Activated CD4-positive, alpha-beta T cell treated with anti-CD3 and anti-CD28 coated beads, Interleukin-2, amount 10 ng/mL, durations not matched to agents 24 days and 14 days (primary cell): ENCODE measurements at regions of chr12 and their contacts with region 1.

Region 1: GRCh38 chr12:68435816-68436215 is 103.7 kb upstream of the MDM1 start:
- DNase-seq: no peak
- H3K4me3 Mint-ChIP-seq: no peak overlapping the region
- H3K27ac Mint-ChIP-seq: no peak overlapping the region
- H3K4me1 Mint-ChIP-seq: peaks cover 2% of the 10 kb centered on the region
- H3K27me3 Mint-ChIP-seq: no peaks in the 10 kb centered on the region

Region 2: GRCh38 chr12:68387338-68387737 is 48.5 kb before region 1 on chr12:
- intact Hi-C with region 1: loop called (anchors 5 kb)
- DNase-seq: no peak
- H3K4me3 Mint-ChIP-seq: no peak overlapping the region
- H3K27ac Mint-ChIP-seq: no peak overlapping the region
- H3K4me1 Mint-ChIP-seq: peaks cover 19% of the 10 kb centered on the region
- H3K27me3 Mint-ChIP-seq: no peaks in the 10 kb centered on the region

Region 3: GRCh38 chr12:68397566-68398158 is 38.2 kb before region 1 on chr12:
- intact Hi-C with region 1: no loop called
- DNase-seq: no peak
- H3K4me3 Mint-ChIP-seq: no peak overlapping the region
- H3K27ac Mint-ChIP-seq: no peak overlapping the region
- H3K4me1 Mint-ChIP-seq: peaks cover 4% of the 10 kb centered on the region
- H3K27me3 Mint-ChIP-seq: no peaks in the 10 kb centered on the region